ENCODE measurements at regions of chr15 and their contacts with region 1.

Region 1: GRCh38 chr15:74768771-74769342 is 13.0 kb upstream of the CSK start:
- DNase-seq: peak in 1 of 2 donors; percentile 67
- ATAC-seq: peak; percentile 43

Region 2: DNA sequence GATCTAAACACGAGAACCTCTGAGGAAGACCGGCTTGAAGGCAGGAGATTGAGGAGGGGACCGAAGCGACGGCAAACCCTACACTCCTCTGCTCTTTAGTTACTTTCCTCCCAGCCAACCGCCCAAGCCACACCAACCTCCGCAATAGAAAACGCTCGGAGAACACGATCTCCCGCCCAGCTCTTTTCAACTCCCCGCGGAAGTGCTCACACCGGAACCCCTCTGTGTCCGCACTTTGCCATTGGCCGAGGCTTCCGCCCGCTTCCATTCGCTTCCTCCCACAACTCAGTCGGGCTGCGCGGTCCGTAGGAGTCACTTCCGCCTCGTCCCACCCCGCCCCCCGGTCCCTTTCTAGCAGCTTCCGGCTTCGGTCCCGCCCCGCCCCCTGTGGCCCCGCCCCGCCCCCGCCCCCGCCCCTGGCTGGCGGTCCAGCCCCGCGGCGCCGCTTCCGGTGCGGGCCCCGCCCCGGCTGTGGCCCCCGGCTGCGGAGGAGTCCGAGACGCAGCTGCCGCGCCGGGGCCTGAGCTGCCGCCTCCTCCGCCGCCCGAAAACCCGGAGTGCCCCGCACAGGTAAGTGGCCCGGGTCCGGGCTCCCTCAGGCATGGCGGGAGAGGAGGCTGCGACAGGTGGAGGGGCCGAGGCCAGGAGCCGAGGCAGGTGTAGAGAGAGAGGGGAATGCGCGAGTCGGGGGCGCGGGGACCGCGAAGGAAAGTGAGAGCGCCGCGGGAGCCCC is 227.9 kb before region 1 on chr15 and contains the start of gene ARID3B:
- intact Hi-C with region 1: no loop called
- DNase-seq: peak; percentile 98 to 99
- ATAC-seq: peak; percentile 95
- total RNA-seq, gene ARID3B: 11.7 to 12.1 TPM

Region 3: DNA sequence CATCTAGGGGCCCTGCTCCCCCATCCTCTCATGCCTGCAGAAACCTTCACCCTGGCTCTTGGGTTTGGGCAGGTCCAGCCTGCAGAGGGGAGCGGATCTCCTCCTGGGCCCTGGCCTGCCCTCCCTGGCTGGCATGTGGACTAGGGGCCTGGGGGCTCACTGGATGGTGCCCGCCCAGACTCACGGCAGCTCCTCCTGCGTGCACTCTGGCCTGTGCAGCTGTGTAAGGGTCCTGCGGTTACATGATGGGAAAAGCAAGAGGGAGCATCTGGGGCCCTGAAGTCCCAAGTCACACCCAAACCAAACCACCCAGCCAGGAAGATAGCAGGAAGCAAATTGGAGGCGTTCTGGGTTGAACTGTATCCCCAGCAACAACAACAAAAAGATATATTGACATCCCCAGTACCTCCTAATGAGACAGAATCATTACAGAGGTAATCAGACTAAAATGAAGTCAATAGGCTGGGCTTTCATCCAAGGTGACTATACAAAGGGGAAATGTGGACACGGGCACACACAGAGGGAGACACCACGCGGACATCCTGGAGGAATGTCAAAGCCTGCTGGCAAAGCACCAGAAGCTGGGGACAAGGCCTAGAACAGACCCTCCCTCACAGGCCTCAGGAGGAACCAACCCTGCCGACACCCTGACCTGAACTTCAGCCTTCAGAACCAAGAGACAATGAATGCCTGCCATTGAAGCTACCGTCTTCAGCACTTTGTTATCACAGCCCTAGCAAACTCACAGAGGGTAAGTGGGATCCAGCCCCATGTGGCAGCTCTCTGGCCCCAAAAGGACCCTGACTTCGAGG is 163.7 kb before region 1 on chr15:
- intact Hi-C with region 1: no loop called
- DNase-seq: no peak
- ATAC-seq: no peak

Region 4: GRCh38 chr15:74635228-74635627 is 133.6 kb before region 1 on chr15:
- intact Hi-C with region 1: loop called (anchors 2 to 5 kb)
- DNase-seq: peak in 1 of 2 donors; percentile 77
- ATAC-seq: peak; percentile 80

Region 5: GRCh38 chr15:74956648-74957300 is 187.9 kb after region 1 on chr15 and contains the start of gene RPP25:
- intact Hi-C with region 1: loop called in 1 of 2 experiments (anchors 10 kb)
- DNase-seq: peak; percentile 87 to 89
- ATAC-seq: peak; percentile 72
- total RNA-seq, gene RPP25: 12.0 to 12.7 TPM

Region 6: DNA sequence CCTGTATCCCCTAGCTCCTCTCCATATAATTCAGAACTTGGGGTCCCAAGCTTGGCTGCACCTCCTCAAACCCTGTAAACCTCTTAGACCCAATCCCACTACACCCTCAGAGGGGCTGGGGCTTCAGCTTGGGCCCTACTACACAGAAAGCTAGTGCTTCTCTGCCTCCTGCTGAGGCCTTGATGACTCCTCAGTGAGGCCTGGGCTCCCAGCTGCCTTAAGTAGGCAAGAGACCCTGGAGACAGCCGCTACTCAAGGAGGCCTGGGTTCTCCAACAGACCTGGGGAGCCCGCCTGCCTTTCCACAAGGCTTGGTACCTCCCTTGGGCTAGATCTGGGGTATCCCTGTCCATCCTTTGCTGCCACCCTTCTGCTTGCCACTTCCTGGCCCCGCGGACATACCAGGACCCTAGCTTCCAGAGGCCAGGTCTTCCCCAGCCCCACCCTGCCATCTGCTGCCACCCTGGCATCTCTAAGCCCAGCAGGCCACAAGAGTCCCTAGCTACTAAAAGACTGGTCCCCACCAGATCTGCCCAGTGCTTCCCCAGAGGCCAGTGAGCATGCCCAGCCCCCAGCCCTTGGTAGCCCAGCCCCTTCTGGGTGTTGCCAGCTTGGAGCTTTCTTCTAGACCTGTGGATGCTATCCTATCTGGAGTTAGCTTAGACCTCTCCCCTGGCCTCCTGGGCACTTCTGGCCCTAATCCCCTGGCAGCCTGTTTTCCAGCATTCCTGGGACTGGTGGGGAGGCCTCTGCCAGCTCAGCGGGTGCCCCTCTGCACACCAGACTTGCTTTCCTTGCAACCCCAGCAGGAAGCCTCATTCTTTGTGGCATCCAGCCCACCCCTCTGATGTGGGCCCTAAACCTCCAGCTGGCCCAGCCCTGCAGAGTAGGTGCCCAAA is 446.5 kb after region 1 on chr15:
- intact Hi-C with region 1: no loop called
- DNase-seq: no peak
- ATAC-seq: peak; percentile 12

Measured in left colon (tissue), 2 donors.